AG04450 (cell line): ENCODE measurements at regions of chr19 and their contacts with region 1.

Region 1: DNA sequence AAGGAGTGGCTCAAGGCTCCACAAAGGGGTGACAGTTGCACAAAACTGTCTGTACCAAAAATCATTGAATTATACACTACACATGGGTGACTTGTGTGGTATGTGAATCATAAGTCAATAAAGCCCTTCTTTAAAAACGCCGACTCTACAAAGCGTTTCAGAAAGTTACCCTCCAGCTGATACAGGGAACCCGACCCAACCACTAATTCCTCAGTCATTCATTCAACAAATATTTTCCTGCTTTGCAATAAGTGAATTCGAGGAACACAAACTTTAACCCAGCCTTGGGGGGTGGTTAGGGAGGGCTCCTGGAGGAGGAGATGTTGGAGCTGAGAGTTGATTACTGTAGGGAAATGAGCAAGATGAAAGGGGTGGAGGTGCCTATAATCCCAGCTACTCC is 32.0 kb downstream of the LTBP4 start:
- DNase-seq: peak; percentile 37
- H3K4me3 ChIP-seq: no peak overlapping the region
- H3K27ac ChIP-seq: peak overlapping the region; percentile 65
- H3K27me3 ChIP-seq: no peaks in the 10 kb centered on the region
- CTCF ChIP-seq: no peak

Region 2: DNA sequence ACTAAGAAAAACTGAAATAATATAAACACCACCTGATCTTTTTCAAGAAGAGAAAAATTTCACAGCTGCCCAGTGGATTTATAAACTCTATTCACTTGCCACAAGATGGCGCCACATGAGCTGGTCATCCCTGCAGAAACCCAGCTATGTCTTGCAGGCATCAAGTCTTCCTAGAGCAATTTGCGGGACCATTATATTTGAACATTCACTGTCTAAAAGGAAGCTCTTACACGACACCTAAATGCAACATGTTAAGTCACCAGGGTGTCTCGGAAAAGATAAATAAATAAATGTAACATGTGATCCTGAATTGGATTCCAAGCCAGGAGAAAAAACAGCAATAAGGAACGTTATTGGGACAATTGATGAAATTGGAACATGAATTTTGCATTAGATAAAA is 327.8 kb before region 1 on chr19:
- CTCF ChIA-PET with region 1: interaction called, 18 read pairs
- POLR2A ChIA-PET with region 1: interaction called, 4 read pairs
- DNase-seq: peak; percentile 83
- H3K4me3 ChIP-seq: no peak overlapping the region
- H3K27ac ChIP-seq: no peak overlapping the region
- H3K27me3 ChIP-seq: no peaks in the 10 kb centered on the region
- CTCF ChIP-seq: peak; percentile 79

Region 3: GRCh38 chr19:40529093-40529954 is 103.9 kb before region 1 on chr19:
- CTCF ChIA-PET with region 1: interaction called, 10 read pairs
- POLR2A ChIA-PET with region 1: no interaction called
- DNase-seq: peak; percentile 54
- H3K4me3 ChIP-seq: peak overlapping the region; percentile 50
- H3K27ac ChIP-seq: no peak overlapping the region
- H3K27me3 ChIP-seq: peaks cover 17% of the 10 kb centered on the region
- CTCF ChIP-seq: peak; percentile 91

Region 4: GRCh38 chr19:40603389-40604135 is 29.6 kb before region 1 on chr19:
- CTCF ChIA-PET with region 1: interaction called, 59 read pairs
- POLR2A ChIA-PET with region 1: interaction called, 20 read pairs
- DNase-seq: peak; percentile 92
- H3K4me3 ChIP-seq: peak overlapping the region; percentile 69
- H3K27ac ChIP-seq: peak overlapping the region; percentile 93
- H3K27me3 ChIP-seq: no peaks in the 10 kb centered on the region
- CTCF ChIP-seq: no peak

Region 5: GRCh38 chr19:40650749-40651305 is 17.6 kb after region 1 on chr19:
- CTCF ChIA-PET with region 1: interaction called, 101 read pairs
- POLR2A ChIA-PET with region 1: interaction called, 23 read pairs
- DNase-seq: peak; percentile 36
- H3K4me3 ChIP-seq: no peak overlapping the region
- H3K27ac ChIP-seq: peak overlapping the region; percentile 47
- H3K27me3 ChIP-seq: no peaks in the 10 kb centered on the region
- CTCF ChIP-seq: no peak

Region 6: GRCh38 chr19:40777937-40778705 is 144.9 kb after region 1 on chr19 and contains the start of gene RAB4B:
- CTCF ChIA-PET with region 1: interaction called, 13 read pairs
- POLR2A ChIA-PET with region 1: no interaction called
- DNase-seq: peak; percentile 100
- H3K4me3 ChIP-seq: peak within 1 kb of the TSS; percentile 75
- H3K27ac ChIP-seq: peak within 1 kb of the TSS; percentile 96
- H3K27me3 ChIP-seq: no peaks in the 10 kb centered on the region
- CTCF ChIP-seq: no peak
- polyA plus RNA-seq, gene RAB4B: 14.0 and 16.2 TPM in 2 replicates